Activated T-helper 1 cell treated with anti-CD3 and anti-CD28 coated beads, Interleukin-12 subunit alpha, Interleukin-12 subunit beta, Interleukin-2, Interleukin-4 antibody, amounts not matched to agents 30 ng/mL and 10 ng/mL and 1 ng/mL, durations not matched to agents 14 hours and 24 hours and 36 hours (primary cell): ENCODE measurements at regions of chr2 and their contacts with region 1.

Region 1: GRCh38 chr2:157468931-157469708 is 25.2 kb upstream of the CYTIP start:
- DNase-seq: no peak
- H3K4me3 Mint-ChIP-seq: peak overlapping the region; percentile 71
- H3K27ac Mint-ChIP-seq: peak overlapping the region; percentile 97
- H3K4me1 Mint-ChIP-seq: peaks cover 90% of the 10 kb centered on the region
- H3K27me3 Mint-ChIP-seq: no peaks in the 10 kb centered on the region

Region 2: GRCh38 chr2:157375384-157375783 is 93.7 kb before region 1 on chr2:
- intact Hi-C with region 1: no loop called
- DNase-seq: no peak
- H3K4me3 Mint-ChIP-seq: no peak overlapping the region
- H3K27ac Mint-ChIP-seq: no peak overlapping the region
- H3K4me1 Mint-ChIP-seq: no peaks in the 10 kb centered on the region
- H3K27me3 Mint-ChIP-seq: no peaks in the 10 kb centered on the region

Region 3: GRCh38 chr2:157404363-157404762 is 64.8 kb before region 1 on chr2:
- intact Hi-C with region 1: loop called (anchors 1 kb)
- DNase-seq: peak; percentile 62
- H3K4me3 Mint-ChIP-seq: peak overlapping the region; percentile 37
- H3K27ac Mint-ChIP-seq: peak overlapping the region; percentile 86
- H3K4me1 Mint-ChIP-seq: peaks cover 72% of the 10 kb centered on the region
- H3K27me3 Mint-ChIP-seq: no peaks in the 10 kb centered on the region

Region 4: DNA sequence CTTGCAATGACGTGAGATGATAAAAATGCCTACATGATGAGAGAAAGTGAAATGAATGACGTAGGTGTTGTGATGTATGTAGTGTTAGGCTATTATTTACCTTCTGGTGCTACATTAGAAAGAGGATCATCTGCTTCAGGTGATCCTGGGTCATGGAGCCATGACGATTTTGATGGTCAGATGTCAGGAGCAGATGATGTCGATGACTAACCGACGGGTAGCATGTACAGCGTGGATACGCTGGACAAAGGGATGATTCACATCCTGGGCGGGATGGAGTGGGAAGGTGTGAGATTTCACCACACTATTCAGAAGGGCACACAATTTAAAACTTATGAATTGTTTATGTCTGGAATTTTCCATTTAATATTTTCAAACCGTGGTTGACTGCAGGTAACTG is 203.0 kb after region 1 on chr2:
- intact Hi-C with region 1: no loop called
- DNase-seq: no peak
- H3K4me3 Mint-ChIP-seq: no peak overlapping the region
- H3K27ac Mint-ChIP-seq: no peak overlapping the region
- H3K4me1 Mint-ChIP-seq: no peaks in the 10 kb centered on the region
- H3K27me3 Mint-ChIP-seq: peaks cover 3% of the 10 kb centered on the region